ENCODE measurements at regions of chr1 and their contacts with region 1.

Region 1: DNA sequence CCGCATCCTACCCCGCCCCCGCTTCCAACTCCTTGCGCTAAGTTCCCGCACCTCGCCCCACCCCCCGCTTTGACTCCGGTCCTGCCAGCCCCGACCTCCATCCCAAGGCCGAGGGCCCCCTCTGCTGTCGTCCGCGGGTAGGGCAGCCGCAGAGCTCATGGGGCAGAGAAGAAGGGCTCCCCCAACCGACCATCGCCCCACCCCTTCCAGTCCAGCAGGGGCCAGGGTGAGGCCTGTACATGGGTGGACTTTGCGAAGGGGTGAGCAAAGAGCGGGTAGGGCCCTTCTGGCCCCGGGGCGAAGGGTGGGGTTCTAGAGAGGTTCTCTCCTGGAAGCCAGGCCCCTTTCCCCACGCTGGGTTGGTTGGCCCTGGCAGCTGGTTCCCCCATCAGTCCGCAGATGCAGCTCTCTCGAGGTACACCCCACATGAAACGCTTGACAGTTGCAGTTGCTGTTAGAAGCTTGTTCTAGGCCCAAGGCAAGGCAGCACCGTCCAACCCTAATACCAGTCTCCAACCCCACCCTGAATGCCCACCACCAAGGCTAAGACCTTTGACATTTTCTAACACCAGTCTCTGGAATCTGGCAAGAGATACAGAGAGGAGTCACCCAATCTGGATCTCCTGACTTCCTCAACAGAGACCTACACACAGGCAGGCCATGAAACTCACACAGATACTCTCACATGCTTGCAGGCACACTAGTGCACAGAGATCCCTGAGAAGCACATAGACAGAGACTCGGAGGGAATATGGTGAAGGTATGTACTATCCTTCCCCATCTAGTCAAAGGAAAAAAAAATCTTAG is 25.3 kb upstream of the ADGRB2 start:
- DNase-seq: peak; percentile 99
- H3K4me3 Mint-ChIP-seq: peak overlapping the region; percentile 73
- H3K27ac Mint-ChIP-seq: peak overlapping the region; percentile 80
- H3K4me1 Mint-ChIP-seq: peaks cover 10% of the 10 kb centered on the region
- H3K27me3 Mint-ChIP-seq: no peaks in the 10 kb centered on the region
- CTCF ChIP-seq: peak; percentile 87

Region 2: DNA sequence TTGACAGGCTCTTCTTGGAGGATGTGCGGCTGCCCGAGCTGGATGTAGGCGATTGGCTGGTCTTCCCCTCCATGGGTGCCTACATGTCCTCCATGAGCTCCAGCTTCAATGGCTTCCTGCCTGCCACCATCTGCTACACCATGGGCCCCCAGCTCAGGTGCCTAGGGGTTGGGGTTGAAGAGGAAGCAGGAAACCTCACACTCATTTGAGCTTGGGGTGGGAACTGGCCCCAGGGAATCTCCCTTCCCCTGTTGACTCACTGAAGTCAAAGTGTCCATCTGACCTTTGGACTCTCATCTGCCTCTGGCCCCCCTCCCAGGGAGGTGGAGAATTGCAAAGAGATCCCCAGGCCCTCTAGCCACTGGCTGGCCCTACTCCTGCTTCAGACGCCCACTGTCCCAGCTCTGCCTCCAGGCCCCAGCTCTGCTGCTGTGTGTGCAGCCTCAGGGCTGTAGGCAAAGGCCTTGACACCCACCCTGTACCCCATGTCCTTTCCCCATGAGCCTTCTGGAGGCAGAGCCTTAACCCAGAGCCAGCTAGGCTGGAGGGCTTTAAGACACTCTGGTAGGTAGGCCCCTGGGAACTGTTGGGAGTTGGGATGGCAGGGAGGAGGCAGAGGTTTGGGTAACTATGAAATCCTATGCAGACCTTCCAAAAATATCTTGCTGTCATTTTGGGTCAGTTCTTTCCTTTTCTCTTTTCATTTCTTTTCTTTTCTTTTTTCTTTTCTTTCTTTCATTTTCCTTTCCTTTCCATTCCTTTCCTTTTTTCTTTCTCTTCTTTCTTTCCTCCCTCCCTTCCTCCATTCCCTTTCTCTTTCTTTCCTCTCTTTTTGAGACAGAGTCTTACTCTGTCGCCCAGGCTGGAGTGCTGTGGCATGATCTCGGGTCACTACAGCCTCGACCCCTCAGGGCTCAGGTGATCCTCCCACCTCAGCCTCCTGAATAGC is 280.1 kb before region 1 on chr1:
- CTCF ChIA-PET with region 1: no interaction called
- intact Hi-C with region 1: no loop called
- DNase-seq: no peak
- H3K4me3 Mint-ChIP-seq: no peak overlapping the region
- H3K27ac Mint-ChIP-seq: peak overlapping the region; percentile 6
- H3K4me1 Mint-ChIP-seq: peaks cover 42% of the 10 kb centered on the region
- H3K27me3 Mint-ChIP-seq: no peaks in the 10 kb centered on the region
- CTCF ChIP-seq: no peak

Region 3: GRCh38 chr1:31663622-31664452 is 125.6 kb before region 1 on chr1:
- CTCF ChIA-PET with region 1: interaction called, 28 read pairs
- intact Hi-C with region 1: loop called (anchors 1 kb)
- DNase-seq: peak; percentile 78
- H3K4me3 Mint-ChIP-seq: no peak overlapping the region
- H3K27ac Mint-ChIP-seq: no peak overlapping the region
- H3K4me1 Mint-ChIP-seq: peaks cover 13% of the 10 kb centered on the region
- H3K27me3 Mint-ChIP-seq: peaks cover 42% of the 10 kb centered on the region
- CTCF ChIP-seq: peak; percentile 96

Region 4: DNA sequence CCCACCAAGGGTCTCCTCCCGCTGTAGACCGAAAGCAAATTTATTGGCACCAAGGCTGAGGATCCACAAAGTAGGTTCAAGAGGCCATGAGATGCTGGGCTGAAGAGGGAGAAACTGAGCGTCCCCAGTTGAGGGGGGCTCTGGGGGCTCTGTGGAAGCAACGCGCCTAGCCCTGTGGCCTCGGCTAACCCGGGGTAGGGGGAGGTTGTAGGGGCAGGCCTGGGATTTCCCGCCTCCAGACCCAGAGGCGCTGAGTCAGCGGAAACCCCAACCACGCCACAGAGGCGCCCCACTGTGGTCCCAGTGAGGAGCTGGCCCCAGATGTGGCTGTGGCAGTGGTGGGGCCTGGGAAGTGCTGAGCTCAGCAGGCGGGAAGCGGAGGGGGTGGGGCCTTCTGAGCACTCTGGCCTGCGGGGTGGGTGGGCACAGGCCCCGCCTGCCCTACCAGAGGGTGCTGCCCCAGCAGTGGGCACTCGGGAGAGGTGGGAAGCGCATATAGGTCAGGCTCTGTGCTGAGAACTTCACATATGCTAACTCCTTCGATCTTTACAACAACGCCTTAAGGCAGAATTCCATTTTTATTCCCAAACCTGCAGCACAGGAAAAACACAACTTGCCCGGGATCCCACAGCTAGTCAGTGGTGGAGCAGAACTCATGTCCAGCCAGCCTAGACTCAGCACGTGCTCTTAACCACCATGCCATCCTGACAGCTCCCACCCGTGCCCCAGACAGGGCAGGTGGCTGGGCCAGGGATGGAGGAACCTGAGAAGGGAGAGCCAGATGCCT is 84.2 kb before region 1 on chr1:
- CTCF ChIA-PET with region 1: interaction called, 12 read pairs
- intact Hi-C with region 1: no loop called
- DNase-seq: peak; percentile 35
- H3K4me3 Mint-ChIP-seq: no peak overlapping the region
- H3K27ac Mint-ChIP-seq: no peak overlapping the region
- H3K4me1 Mint-ChIP-seq: peaks cover 37% of the 10 kb centered on the region
- H3K27me3 Mint-ChIP-seq: peaks cover 37% of the 10 kb centered on the region
- CTCF ChIP-seq: no peak

Region 5: DNA sequence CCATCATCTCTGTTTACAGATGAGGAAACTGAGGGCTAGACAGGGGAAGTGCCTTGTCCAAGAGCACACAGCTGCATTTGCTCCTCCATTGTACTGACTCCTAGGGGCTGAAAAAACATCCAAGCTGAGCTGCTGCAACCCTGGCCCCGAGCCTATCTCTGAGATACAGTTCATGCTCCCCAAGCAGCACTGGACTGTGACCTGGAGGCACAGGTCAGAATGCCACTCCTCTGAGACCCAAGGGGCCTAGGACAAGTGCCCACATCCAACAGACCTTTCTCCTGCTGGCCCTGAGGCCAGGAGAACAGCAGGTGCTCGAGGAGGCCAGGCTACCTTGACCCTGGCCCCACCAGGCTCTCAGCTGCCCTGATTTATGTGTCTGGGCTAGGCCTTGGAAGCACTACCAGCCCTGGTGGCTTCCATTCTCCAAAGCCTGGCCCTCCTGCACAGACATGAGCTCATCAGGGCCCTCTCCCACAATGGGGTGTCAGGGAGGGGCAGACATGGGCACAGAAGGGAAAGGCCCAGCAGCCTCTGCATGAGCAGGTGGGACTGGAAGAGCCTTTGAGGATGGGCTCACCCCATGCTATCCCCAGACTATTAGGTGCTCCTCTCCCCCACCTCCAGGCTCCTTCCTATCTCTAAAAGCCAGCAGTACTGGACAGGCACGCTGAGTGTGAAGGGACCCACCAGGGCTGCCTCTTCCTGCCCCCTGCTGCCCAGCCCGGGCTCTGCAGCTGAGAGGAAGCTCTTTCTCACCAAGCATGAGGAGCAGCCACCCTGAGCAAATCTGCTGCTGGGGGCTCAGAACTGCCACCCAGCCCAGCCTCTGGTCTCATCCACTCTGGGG is 44.1 kb before region 1 on chr1:
- CTCF ChIA-PET with region 1: interaction called, 30 read pairs
- intact Hi-C with region 1: no loop called
- DNase-seq: peak; percentile 84
- H3K4me3 Mint-ChIP-seq: no peak overlapping the region
- H3K27ac Mint-ChIP-seq: no peak overlapping the region
- H3K4me1 Mint-ChIP-seq: peaks cover 18% of the 10 kb centered on the region
- H3K27me3 Mint-ChIP-seq: peaks cover 65% of the 10 kb centered on the region
- CTCF ChIP-seq: peak; percentile 68

Region 6: DNA sequence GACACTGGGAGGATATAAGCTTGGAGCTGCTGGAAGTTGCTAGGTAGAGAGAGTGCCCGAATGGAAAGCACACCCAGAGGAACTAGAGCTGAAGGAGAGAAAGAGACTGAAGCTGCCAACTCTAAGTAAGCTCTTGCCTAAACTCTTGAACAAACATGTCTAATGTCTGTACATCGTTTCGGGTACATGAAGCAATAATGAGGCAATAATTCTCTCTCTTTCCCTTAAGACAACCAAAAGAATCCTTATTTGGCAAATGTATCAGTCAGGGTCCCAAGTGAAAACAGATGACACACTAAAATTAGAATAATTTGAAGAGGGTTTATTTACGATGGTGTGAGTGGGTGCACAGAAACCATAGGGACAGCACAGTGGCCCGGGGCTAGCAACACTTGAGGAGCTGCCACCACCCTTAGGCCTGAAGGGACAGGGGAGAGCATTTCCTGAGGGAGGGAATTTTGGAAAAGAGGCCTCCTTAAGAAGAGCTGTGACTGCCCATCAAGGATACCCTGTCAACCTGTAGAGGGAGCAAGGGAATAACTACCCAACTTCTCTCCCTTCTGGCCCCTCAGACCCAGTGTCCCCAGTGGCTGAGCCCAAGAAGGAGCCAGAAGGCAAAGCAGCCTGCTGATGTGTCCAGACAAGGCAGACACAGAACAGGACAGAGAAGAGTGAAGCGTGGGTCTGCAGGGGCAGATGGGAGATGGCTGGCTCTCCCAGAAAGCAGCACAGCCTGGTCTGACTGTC is 188.1 kb after region 1 on chr1:
- CTCF ChIA-PET with region 1: interaction called, 10 read pairs
- intact Hi-C with region 1: no loop called
- DNase-seq: peak; percentile 16
- H3K4me3 Mint-ChIP-seq: no peak overlapping the region
- H3K27ac Mint-ChIP-seq: no peak overlapping the region
- H3K4me1 Mint-ChIP-seq: no peaks in the 10 kb centered on the region
- H3K27me3 Mint-ChIP-seq: no peaks in the 10 kb centered on the region
- CTCF ChIP-seq: peak; percentile 28

Region 7: GRCh38 chr1:32221980-32222755 is 432.7 kb after region 1 on chr1 and contains the starts of genes EIF3I and TMEM234:
- CTCF ChIA-PET with region 1: no interaction called
- intact Hi-C with region 1: no loop called
- DNase-seq: peak; percentile 90
- H3K4me3 Mint-ChIP-seq: peak within 1 kb of the TSS; percentile 85
- H3K27ac Mint-ChIP-seq: peak within 1 kb of the TSS; percentile 77
- H3K4me1 Mint-ChIP-seq: peaks cover 24% of the 10 kb centered on the region
- H3K27me3 Mint-ChIP-seq: no peaks in the 10 kb centered on the region
- CTCF ChIP-seq: no peak
- total RNA-seq, gene EIF3I: 178 and 186 TPM in 2 replicates
- total RNA-seq, gene TMEM234: 31.6 and 35.5 TPM in 2 replicates